Activated CD4-positive, alpha-beta memory T cell treated with anti-CD3 and anti-CD28 coated beads, Interleukin-2, amount 10 ng/mL, durations not matched to agents 7 days and 5 days (primary cell): ENCODE measurements at regions of chr7 and their contacts with region 1.

Region 1: GRCh38 chr7:50304158-50304910 is at the start of gene IKZF1:
- DNase-seq: peak; percentile 58
- H3K4me3 Mint-ChIP-seq: peak within 1 kb of the TSS; percentile 88
- H3K27ac Mint-ChIP-seq: peak within 1 kb of the TSS; percentile 99
- H3K4me1 Mint-ChIP-seq: peaks cover 29% of the 10 kb centered on the region
- H3K27me3 Mint-ChIP-seq: peaks cover 8% of the 10 kb centered on the region
- total RNA-seq, gene IKZF1: 383 to 404 TPM

Region 2: DNA sequence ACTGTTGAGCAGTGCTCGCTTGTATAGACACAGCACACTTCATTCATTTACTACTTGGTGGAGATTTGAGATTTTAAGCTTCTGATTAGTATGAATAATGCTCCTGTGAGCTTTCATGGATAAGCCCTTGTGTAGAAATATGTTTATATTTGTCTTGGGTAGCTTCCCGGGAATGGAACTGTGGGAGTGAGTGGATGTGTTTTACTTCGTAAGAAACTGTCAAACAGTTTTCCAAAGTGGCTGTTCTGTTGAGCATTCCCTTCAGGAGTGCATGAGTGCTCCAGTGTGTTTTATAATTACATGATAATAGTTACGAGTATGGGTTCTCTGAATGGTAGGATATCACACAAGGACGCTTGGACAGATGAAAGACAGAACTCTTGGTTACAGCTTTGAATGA is 481.5 kb before region 1 on chr7:
- CTCF ChIA-PET with region 1: no interaction called
- POLR2A ChIA-PET with region 1: no interaction called
- DNase-seq: no peak
- H3K4me3 Mint-ChIP-seq: no peak overlapping the region
- H3K27ac Mint-ChIP-seq: no peak overlapping the region
- H3K4me1 Mint-ChIP-seq: no peaks in the 10 kb centered on the region
- H3K27me3 Mint-ChIP-seq: no peaks in the 10 kb centered on the region

Region 3: DNA sequence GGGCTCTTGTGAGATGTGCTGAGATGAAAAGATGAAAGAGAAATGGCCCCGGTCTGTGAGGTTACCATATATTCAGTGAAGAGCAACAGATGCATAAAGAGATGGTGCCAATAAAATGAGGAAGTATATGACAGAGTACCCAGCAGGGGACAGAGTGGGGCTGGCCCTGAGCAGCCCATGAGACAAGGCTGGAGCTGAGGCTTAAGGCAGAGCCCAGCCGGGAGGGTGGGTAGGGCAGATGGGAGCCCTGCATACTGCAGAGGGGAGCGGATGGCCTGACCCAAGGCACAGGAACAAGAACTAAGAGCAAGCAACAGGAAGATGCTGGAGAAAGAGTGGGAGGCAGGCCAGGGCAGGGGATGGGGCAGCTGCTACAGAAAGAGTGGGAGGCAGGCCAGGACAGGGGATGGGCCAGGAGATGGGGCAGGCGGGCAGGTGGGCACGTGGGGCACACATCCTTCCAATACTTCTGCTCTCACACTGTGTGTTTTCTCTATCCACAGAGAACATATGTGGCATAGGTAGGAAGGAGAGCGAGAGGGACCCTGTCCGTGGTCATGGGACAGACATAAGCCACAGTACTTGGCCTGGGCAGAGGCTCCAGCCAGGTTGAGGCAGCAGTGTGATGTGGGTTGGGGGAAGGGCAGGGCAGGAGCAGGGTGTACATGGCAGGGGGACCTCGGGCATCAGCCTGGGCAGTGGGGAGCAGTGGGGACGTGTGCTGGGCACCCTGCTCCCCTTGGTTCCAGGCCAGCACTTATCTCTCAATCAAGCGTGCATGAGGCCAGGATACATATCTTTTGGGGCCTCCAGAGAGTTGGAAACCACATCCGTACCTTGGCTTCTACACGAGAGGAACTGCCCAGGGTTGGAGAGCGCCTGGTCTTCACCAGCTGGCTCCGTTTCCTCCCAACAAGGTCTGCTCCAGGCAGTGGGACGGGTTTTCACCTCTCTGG is 91.4 kb before region 1 on chr7:
- CTCF ChIA-PET with region 1: interaction called, 4 read pairs
- POLR2A ChIA-PET with region 1: interaction called, 367 read pairs
- DNase-seq: peak; percentile 57
- H3K4me3 Mint-ChIP-seq: peak overlapping the region; percentile 15
- H3K27ac Mint-ChIP-seq: peak overlapping the region; percentile 83
- H3K4me1 Mint-ChIP-seq: peaks cover 91% of the 10 kb centered on the region
- H3K27me3 Mint-ChIP-seq: no peaks in the 10 kb centered on the region

Region 4: GRCh38 chr7:50426280-50427045 is 122.1 kb after region 1 on chr7:
- CTCF ChIA-PET with region 1: no interaction called
- POLR2A ChIA-PET with region 1: no interaction called
- DNase-seq: no peak
- H3K4me3 Mint-ChIP-seq: no peak overlapping the region
- H3K27ac Mint-ChIP-seq: no peak overlapping the region
- H3K4me1 Mint-ChIP-seq: no peaks in the 10 kb centered on the region
- H3K27me3 Mint-ChIP-seq: no peaks in the 10 kb centered on the region